GM12878 (cell line): ENCODE measurements at regions of chr2 and their contacts with region 1.

Region 1: GRCh38 chr2:37851828-37852584 is 73.1 kb upstream of the RMDN2 start:
- DNase-seq: peak; percentile 80
- ATAC-seq: peak; percentile 86
- H3K4me3 ChIP-seq: peak overlapping the region; percentile 17; the same call in 1 of the 2 replicates
- H3K27ac ChIP-seq: peak overlapping the region; percentile 67
- H3K4me1 ChIP-seq: peaks cover 32% of the 10 kb centered on the region
- H3K27me3 ChIP-seq: no peaks in the 10 kb centered on the region
- CTCF ChIP-seq: peak in 1 of 3 experiments; percentile 8; a peak in 1 of 6 replicates
- EP300 ChIP-seq: peak; percentile 23 to 53; a peak in 1 of 4 replicates
- POLR2A ChIP-seq: no peak
- RAD21 ChIP-seq: peak; percentile 45

Region 2: GRCh38 chr2:37795938-37796337 is 56.1 kb before region 1 on chr2:
- CTCF ChIA-PET with region 1: no interaction called
- POLR2A ChIA-PET with region 1: no interaction called
- RAD21 ChIA-PET with region 1: no interaction called
- SMC1A ChIA-PET with region 1: no interaction called
- in situ Hi-C with region 1: no loop called
- intact Hi-C with region 1: no loop called
- DNase-seq: no peak
- ATAC-seq: no peak
- H3K4me3 ChIP-seq: no peak overlapping the region
- H3K27ac ChIP-seq: no peak overlapping the region
- H3K4me1 ChIP-seq: peaks cover 3% of the 10 kb centered on the region; the same call in 1 of the 2 replicates
- H3K27me3 ChIP-seq: no peaks in the 10 kb centered on the region
- CTCF ChIP-seq: no peak
- EP300 ChIP-seq: no peak
- POLR2A ChIP-seq: no peak
- RAD21 ChIP-seq: no peak

Region 3: DNA sequence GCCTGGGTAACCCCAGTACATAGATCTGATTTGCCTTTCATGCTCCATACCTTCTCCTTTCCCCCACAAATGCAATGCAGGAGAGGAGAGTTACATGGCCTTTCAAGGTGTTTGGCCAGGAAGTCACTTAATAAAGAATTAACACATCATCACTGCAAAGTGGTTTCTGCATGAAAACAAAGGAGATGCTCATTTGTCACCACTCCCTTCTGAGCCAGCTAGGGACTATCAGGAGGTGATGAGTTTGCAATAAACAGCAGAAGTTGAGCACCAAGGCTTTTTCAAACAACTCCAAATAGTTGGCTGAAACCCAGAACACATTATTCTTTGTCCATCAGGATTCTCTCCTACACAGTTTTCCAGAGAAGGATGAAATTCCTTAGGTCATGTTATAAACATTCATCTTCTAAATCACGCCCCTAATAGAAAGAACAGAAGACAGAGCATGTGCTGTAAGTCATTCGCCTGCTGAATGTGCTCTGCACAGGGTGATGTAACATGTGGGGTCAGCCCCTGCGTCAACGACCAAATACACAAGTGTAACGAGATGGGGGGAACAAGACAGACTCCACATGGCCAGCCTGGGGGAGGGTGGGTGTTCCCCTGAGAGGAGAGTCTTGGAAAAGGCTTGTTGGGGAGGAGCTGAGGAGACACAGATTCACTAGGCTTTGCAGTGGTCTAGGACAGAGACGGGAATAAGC is 14.2 kb before region 1 on chr2:
- CTCF ChIA-PET with region 1: interaction called, 15 read pairs
- POLR2A ChIA-PET with region 1: interaction called, 9 read pairs
- RAD21 ChIA-PET with region 1: interaction called, 40 read pairs
- SMC1A ChIA-PET with region 1: interaction called, 26 read pairs
- in situ Hi-C with region 1: no loop called
- intact Hi-C with region 1: no loop called
- DNase-seq: no peak
- ATAC-seq: no peak
- H3K4me3 ChIP-seq: no peak overlapping the region
- H3K27ac ChIP-seq: no peak overlapping the region
- H3K4me1 ChIP-seq: peaks cover 4% of the 10 kb centered on the region; the same call in 1 of the 2 replicates
- H3K27me3 ChIP-seq: no peaks in the 10 kb centered on the region
- CTCF ChIP-seq: no peak
- EP300 ChIP-seq: no peak
- POLR2A ChIP-seq: no peak
- RAD21 ChIP-seq: no peak

Region 4: GRCh38 chr2:37865640-37866039 is 13.6 kb after region 1 on chr2:
- CTCF ChIA-PET with region 1: interaction called, 22 read pairs
- POLR2A ChIA-PET with region 1: interaction called, 17 read pairs
- RAD21 ChIA-PET with region 1: interaction called, 215 read pairs
- SMC1A ChIA-PET with region 1: interaction called, 64 read pairs
- in situ Hi-C with region 1: no loop called
- intact Hi-C with region 1: no loop called
- DNase-seq: no peak
- ATAC-seq: no peak
- H3K4me3 ChIP-seq: no peak overlapping the region
- H3K27ac ChIP-seq: no peak overlapping the region
- H3K4me1 ChIP-seq: no peaks in the 10 kb centered on the region
- H3K27me3 ChIP-seq: no peaks in the 10 kb centered on the region
- CTCF ChIP-seq: no peak
- EP300 ChIP-seq: no peak
- POLR2A ChIP-seq: no peak
- RAD21 ChIP-seq: no peak

Region 5: DNA sequence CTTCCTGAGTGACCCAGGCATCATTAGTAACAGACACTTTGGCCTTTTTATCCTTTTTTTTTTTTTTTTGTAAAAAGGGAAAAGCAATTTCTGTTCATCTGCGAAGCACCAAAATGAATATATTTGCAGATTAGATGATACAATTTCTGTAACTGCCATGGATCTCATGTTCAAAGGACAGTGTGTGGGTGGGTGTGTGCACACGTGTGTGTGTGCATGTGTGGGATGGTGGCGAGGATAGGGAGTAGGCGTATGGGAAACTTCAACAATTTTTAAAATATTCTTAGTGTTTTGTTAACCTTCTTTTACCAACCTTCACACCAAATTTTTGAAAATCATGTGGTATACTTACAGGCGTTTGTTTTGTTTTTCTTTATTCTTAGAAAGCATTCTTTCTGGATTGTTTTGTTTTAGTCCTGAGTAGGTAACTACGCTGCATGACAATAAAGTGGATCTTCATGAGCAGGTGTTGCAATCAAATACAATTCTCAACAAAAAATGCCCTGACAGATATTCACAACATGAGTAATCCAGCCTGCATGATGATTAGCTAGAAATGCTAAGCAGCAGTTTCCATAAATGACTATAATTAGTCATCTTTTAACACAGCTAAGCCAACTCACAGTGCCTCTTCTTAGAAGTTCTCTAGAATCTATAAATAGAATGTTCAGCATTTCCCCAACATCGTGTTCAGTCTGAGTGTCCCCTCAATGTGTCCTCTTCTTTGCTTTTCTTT is 19.6 kb after region 1 on chr2:
- CTCF ChIA-PET with region 1: interaction called, 176 read pairs
- POLR2A ChIA-PET with region 1: interaction called, 61 read pairs
- RAD21 ChIA-PET with region 1: interaction called, 215 read pairs
- SMC1A ChIA-PET with region 1: interaction called, 244 read pairs
- in situ Hi-C with region 1: no loop called
- intact Hi-C with region 1: loop called (anchors 2 kb)
- DNase-seq: no peak
- ATAC-seq: peak; percentile 77
- H3K4me3 ChIP-seq: no peak overlapping the region
- H3K27ac ChIP-seq: no peak overlapping the region
- H3K4me1 ChIP-seq: peaks cover 16% of the 10 kb centered on the region
- H3K27me3 ChIP-seq: peaks cover 0 to 2% of the 10 kb centered on the region in 2 experiments; a peak in 1 of 4 replicates
- CTCF ChIP-seq: no peak
- EP300 ChIP-seq: peak in 1 of 2 experiments; percentile 18; a peak in 2 of 4 replicates
- POLR2A ChIP-seq: no peak
- RAD21 ChIP-seq: no peak

Region 6: DNA sequence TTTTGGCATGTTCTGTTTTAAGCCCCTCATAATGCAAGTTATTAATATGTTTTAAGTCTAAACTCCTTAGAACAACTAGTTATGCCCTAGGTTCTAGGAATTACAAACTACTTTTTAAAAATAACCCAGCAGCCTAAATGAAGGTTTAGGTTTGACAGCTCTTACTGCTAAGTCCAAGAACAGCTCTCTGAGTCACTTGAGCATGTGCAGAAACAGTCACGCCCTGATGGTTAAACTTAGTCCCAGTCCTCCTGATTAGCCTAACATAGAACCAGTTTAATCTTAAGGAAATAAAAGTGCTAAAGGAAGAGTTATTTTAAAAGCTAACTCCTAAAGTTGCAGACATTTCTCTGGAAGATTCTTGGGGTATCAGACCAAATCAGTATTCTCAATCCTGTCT is 145.6 kb after region 1 on chr2:
- CTCF ChIA-PET with region 1: no interaction called
- POLR2A ChIA-PET with region 1: no interaction called
- RAD21 ChIA-PET with region 1: no interaction called
- SMC1A ChIA-PET with region 1: no interaction called
- in situ Hi-C with region 1: no loop called
- intact Hi-C with region 1: no loop called
- DNase-seq: no peak
- ATAC-seq: no peak
- H3K4me3 ChIP-seq: no peak overlapping the region
- H3K27ac ChIP-seq: no peak overlapping the region
- H3K4me1 ChIP-seq: no peaks in the 10 kb centered on the region
- H3K27me3 ChIP-seq: no peaks in the 10 kb centered on the region
- CTCF ChIP-seq: no peak
- EP300 ChIP-seq: no peak
- POLR2A ChIP-seq: no peak
- RAD21 ChIP-seq: no peak